Left ventricle myocardium inferior (tissue), 1 donor: ENCODE measurements at regions of chr16 and their contacts with region 1.

Region 1: DNA sequence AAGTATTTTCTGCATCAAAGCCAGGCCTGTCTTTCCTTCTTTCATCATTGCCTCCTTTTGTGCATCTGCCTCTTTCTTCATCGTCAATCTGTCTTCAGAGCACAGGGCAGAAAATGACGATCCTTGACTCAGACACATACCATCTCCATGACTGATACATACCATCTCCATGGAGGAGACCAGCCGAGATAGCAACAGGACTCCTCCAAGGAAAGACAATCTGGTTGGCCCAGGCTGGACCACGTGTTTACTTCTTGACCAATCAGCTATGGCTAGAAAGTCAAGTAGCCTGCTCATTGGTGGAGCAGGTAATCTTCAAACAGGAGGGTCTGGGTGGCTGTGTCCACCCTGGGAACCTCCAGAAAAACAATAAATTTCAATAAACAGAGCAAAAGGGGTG is 164.6 kb downstream of the CPPED1 start:
- DNase-seq: no peak
- H3K4me3 ChIP-seq: no peak overlapping the region
- H3K27ac ChIP-seq: no peak overlapping the region
- H3K4me1 ChIP-seq: no peaks in the 10 kb centered on the region
- H3K27me3 ChIP-seq: peaks cover 16% of the 10 kb centered on the region
- CTCF ChIP-seq: no peak

Region 2: GRCh38 chr16:12699161-12699560 is 60.1 kb after region 1 on chr16:
- intact Hi-C with region 1: loop called (anchors 10 kb)
- DNase-seq: no peak
- H3K4me3 ChIP-seq: no peak overlapping the region
- H3K27ac ChIP-seq: no peak overlapping the region
- H3K4me1 ChIP-seq: no peaks in the 10 kb centered on the region
- H3K27me3 ChIP-seq: no peaks in the 10 kb centered on the region
- CTCF ChIP-seq: no peak